ENCODE measurements at regions of chr4 and their contacts with region 1.

Region 1: DNA sequence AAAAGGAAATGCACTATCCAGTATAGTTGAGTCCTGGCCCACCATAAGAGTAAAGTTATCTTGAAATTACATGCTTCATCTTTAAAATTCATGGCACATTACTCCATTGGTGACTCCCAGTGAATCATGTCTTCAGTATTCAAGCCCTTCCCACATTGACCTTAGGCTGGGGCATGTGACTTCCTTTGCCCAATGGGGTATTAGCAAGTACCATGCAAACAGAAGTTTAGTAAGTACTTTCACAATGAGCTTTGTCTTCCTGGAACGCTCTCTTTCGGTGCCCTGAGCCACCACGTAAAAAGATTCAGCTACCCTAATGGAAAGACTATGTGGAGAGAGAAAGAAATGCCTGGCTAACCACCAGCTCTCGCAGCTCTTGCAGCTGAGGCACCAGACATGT is 235.4 kb downstream of the HNRNPD start:
- DNase-seq: no peak
- H3K4me3 ChIP-seq: no peak overlapping the region
- H3K4me3 Mint-ChIP-seq: peak overlapping the region in 1 of 8 donors; percentile 19
- H3K27ac ChIP-seq: no peak overlapping the region
- H3K27ac Mint-ChIP-seq: peak overlapping the region in 1 of 7 donors; percentile 60
- H3K4me1 ChIP-seq: peaks cover 35% of the 10 kb centered on the region
- H3K4me1 Mint-ChIP-seq: peaks cover 17 to 38% (median 27%) of the 10 kb centered on the region in 4 donors
- H3K27me3 ChIP-seq: no peaks in the 10 kb centered on the region
- H3K27me3 Mint-ChIP-seq: no peaks in the 10 kb centered on the region

Region 2: GRCh38 chr4:81606801-81607501 is 531.4 kb before region 1 on chr4:
- CTCF ChIA-PET with region 1: no interaction called
- POLR2A ChIA-PET with region 1: no interaction called
- intact Hi-C with region 1: no loop called
- DNase-seq: no peak
- H3K4me3 ChIP-seq: no peak overlapping the region
- H3K4me3 Mint-ChIP-seq: no peak overlapping the region
- H3K27ac ChIP-seq: no peak overlapping the region
- H3K27ac Mint-ChIP-seq: no peak overlapping the region
- H3K4me1 ChIP-seq: no peaks in the 10 kb centered on the region
- H3K4me1 Mint-ChIP-seq: peaks cover 0 to 3% (median 0%) of the 10 kb centered on the region in 4 donors
- H3K27me3 ChIP-seq: no peaks in the 10 kb centered on the region
- H3K27me3 Mint-ChIP-seq: peaks cover 3 to 5% of the 10 kb centered on the region in 2 donors

Region 3: GRCh38 chr4:82217986-82218715 is 79.8 kb after region 1 on chr4:
- CTCF ChIA-PET with region 1: interaction called, 4 read pairs
- POLR2A ChIA-PET with region 1: interaction called, 3 read pairs
- intact Hi-C with region 1: loop called (anchors 5 kb)
- DNase-seq: peak in 4 of 5 donors; percentile 10 to 22 (median 17)
- H3K4me3 ChIP-seq: no peak overlapping the region
- H3K4me3 Mint-ChIP-seq: no peak overlapping the region
- H3K27ac ChIP-seq: no peak overlapping the region
- H3K27ac Mint-ChIP-seq: peak overlapping the region in 1 of 7 donors; percentile 32
- H3K4me1 ChIP-seq: peaks cover 15% of the 10 kb centered on the region
- H3K4me1 Mint-ChIP-seq: peaks cover 13 to 24% (median 15%) of the 10 kb centered on the region in 4 donors
- H3K27me3 ChIP-seq: no peaks in the 10 kb centered on the region
- H3K27me3 Mint-ChIP-seq: no peaks in the 10 kb centered on the region